ENCODE measurements at regions of chr10 and their contacts with region 1.

Region 1: GRCh38 chr10:73956476-73957359 is 41.2 kb upstream of the VCL start:
- DNase-seq: peak; percentile 20
- H3K4me3 Mint-ChIP-seq: peak overlapping the region; percentile 49
- H3K27ac Mint-ChIP-seq: peak overlapping the region; percentile 81
- H3K4me1 Mint-ChIP-seq: peaks cover 48% of the 10 kb centered on the region
- H3K27me3 Mint-ChIP-seq: no peaks in the 10 kb centered on the region

Region 2: DNA sequence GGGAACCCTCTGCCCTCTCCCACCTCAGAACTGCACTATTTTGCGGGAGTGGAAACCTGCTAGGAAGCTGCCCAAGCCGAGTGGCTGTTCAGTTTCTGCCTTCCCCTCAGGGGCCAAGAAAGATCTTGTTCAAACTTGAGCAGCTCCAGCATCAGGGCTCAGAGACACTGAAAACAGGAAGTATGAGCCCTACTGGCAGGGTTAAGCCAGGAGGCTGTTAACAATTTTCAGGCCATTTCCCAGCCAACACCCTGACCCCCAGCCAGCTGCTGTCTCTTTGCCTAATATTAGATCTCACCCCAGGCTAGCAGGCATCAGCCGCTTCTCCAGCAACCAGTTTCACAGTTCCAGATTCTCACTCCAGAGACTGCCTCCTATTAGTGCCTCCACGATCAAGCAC is 36.6 kb before region 1 on chr10:
- intact Hi-C with region 1: loop called (anchors 5 kb)
- DNase-seq: no peak
- H3K4me3 Mint-ChIP-seq: no peak overlapping the region
- H3K27ac Mint-ChIP-seq: no peak overlapping the region
- H3K4me1 Mint-ChIP-seq: peaks cover 27% of the 10 kb centered on the region
- H3K27me3 Mint-ChIP-seq: peaks cover 33% of the 10 kb centered on the region

Region 3: GRCh38 chr10:73974309-73974946 is 17.7 kb after region 1 on chr10:
- intact Hi-C with region 1: loop called (anchors 2 kb)
- DNase-seq: no peak
- H3K4me3 Mint-ChIP-seq: peak overlapping the region; percentile 6
- H3K27ac Mint-ChIP-seq: no peak overlapping the region
- H3K4me1 Mint-ChIP-seq: peaks cover 14% of the 10 kb centered on the region
- H3K27me3 Mint-ChIP-seq: peaks cover 19% of the 10 kb centered on the region

Region 4: DNA sequence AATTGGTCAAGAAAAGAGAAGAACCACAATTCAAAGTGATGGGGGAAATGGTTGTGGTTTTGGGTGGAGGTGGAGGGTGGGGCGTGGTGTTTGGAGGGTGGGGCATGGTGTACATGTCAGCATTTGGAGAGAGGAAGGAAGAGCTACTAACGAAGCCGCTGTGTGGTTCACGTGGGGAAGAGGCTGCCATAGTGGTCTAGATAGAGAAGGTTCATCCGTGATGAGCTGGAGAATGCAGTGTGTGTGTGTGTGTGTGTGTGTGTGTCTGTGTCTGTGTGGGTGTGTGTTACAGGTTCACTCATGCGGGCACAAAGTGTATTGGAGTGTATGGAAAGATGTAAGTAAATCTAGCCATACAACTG is 35.1 kb after region 1 on chr10:
- intact Hi-C with region 1: loop called (anchors 1 kb)
- DNase-seq: peak; percentile 79
- H3K4me3 Mint-ChIP-seq: no peak overlapping the region
- H3K27ac Mint-ChIP-seq: peak overlapping the region; percentile 66
- H3K4me1 Mint-ChIP-seq: peaks cover 44% of the 10 kb centered on the region
- H3K27me3 Mint-ChIP-seq: peaks cover 2% of the 10 kb centered on the region

Region 5: GRCh38 chr10:73997787-73998622 is 41.3 kb after region 1 on chr10 and contains the start of gene VCL:
- intact Hi-C with region 1: loop called (anchors 1 kb)
- DNase-seq: peak; percentile 95
- H3K4me3 Mint-ChIP-seq: peak within 1 kb of the TSS; percentile 98
- H3K27ac Mint-ChIP-seq: peak within 1 kb of the TSS; percentile 100
- H3K4me1 Mint-ChIP-seq: peaks cover 59% of the 10 kb centered on the region
- H3K27me3 Mint-ChIP-seq: no peaks in the 10 kb centered on the region
- total RNA-seq, gene VCL: 24.4 and 26.0 TPM in 2 replicates

Region 6: DNA sequence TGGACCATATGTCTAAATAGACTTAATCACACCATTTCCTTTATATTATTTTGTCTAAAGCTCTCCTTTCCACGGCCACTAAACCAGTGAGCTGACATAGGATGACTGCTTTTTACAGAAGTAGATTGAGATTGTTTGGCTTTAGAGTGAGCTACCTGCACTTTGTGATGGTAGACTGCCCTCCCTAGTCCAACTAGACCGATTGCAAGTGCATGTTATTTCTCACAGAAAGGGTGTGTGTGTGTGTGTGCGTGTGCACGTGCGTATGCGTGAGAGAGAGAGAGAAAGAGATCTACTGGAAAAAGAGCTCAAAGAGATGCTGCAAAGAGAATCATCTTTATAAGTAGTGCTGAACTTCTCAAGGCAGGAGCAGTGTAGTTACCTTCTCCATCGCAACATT is 101.9 kb after region 1 on chr10:
- intact Hi-C with region 1: loop called (anchors 1 kb)
- DNase-seq: no peak
- H3K4me3 Mint-ChIP-seq: no peak overlapping the region
- H3K27ac Mint-ChIP-seq: peak overlapping the region; percentile 18
- H3K4me1 Mint-ChIP-seq: peaks cover 45% of the 10 kb centered on the region
- H3K27me3 Mint-ChIP-seq: peaks cover 4% of the 10 kb centered on the region

Region 7: DNA sequence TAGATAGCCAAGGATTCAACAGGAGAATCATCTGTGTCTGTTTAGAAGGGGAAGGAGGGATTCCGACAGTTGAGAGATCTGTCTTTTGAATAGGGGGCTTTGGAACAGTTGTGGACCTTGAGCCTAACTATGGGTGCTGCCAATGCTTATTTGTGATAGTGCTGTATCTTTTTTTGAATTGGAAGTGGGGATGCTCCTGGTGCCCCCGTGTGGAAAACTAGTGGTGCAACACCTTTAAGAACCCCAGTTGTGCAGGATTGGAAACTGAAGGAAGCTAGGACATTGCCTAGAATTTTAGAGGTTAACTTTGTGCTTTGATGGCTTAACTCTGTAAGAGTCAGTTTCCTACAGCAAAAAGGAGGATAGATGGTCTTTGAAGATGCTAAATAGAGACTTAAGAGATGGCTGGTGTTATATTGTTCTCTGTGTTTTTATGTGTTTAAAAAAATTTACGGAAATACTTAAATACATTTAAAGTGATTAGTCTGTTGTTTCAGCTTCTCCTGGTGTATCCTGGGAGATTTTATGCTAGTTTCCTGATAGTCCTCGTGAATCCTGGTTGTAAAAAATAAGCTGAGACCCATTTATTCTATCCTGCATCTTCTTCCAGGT is 124.6 kb after region 1 on chr10:
- intact Hi-C with region 1: loop called (anchors 1 kb)
- DNase-seq: peak; percentile 12
- H3K4me3 Mint-ChIP-seq: no peak overlapping the region
- H3K27ac Mint-ChIP-seq: peak overlapping the region; percentile 0
- H3K4me1 Mint-ChIP-seq: peaks cover 48% of the 10 kb centered on the region
- H3K27me3 Mint-ChIP-seq: no peaks in the 10 kb centered on the region

Measured in activated T-helper 1 cell treated with anti-CD3 and anti-CD28 coated beads, Interleukin-12 subunit alpha, Interleukin-12 subunit beta, Interleukin-2, Interleukin-4 antibody, amounts not matched to agents 30 ng/mL and 10 ng/mL and 1 ng/mL, durations not matched to agents 14 hours and 24 hours and 36 hours (primary cell).